ENCODE measurements at regions of chr18 and their contacts with region 1.

Region 1: GRCh38 chr18:12776821-12777471 is 74.1 kb downstream of the PSMG2 start:
- DNase-seq: no peak
- ATAC-seq: no peak
- H3K4me3 Mint-ChIP-seq: no peak overlapping the region
- H3K27ac Mint-ChIP-seq: no peak overlapping the region
- H3K4me1 Mint-ChIP-seq: peaks cover 13% of the 10 kb centered on the region
- H3K27me3 Mint-ChIP-seq: no peaks in the 10 kb centered on the region

Region 2: DNA sequence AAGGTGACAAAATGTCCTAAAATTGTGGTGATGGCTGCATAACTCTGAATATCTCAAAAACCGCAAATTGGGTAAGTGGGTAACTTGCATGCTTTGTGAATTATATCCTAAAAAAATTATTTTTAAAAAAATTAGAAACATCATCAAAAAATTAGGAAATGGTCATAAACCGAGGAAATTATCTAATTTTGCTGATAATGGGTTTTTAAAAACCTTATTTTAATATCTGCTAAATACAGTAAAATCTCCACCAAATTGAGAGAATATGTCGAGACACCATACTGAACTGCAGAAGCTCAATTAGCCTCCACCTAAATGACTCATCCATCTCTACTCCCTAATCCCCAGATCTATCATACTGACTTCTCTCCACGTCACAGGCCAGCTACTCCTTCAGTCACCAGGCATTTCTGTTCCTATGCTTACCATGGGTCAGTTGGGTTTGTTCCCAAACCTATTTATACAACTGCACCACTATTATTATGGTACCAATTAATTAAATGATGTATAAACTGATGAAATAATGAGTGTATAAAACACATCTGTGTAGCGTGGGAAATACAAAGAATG is 155.1 kb before region 1 on chr18:
- CTCF ChIA-PET with region 1: no interaction called
- POLR2A ChIA-PET with region 1: no interaction called
- DNase-seq: no peak
- ATAC-seq: no peak
- H3K4me3 Mint-ChIP-seq: no peak overlapping the region
- H3K27ac Mint-ChIP-seq: no peak overlapping the region
- H3K4me1 Mint-ChIP-seq: no peaks in the 10 kb centered on the region
- H3K27me3 Mint-ChIP-seq: peaks cover 10% of the 10 kb centered on the region

Region 3: DNA sequence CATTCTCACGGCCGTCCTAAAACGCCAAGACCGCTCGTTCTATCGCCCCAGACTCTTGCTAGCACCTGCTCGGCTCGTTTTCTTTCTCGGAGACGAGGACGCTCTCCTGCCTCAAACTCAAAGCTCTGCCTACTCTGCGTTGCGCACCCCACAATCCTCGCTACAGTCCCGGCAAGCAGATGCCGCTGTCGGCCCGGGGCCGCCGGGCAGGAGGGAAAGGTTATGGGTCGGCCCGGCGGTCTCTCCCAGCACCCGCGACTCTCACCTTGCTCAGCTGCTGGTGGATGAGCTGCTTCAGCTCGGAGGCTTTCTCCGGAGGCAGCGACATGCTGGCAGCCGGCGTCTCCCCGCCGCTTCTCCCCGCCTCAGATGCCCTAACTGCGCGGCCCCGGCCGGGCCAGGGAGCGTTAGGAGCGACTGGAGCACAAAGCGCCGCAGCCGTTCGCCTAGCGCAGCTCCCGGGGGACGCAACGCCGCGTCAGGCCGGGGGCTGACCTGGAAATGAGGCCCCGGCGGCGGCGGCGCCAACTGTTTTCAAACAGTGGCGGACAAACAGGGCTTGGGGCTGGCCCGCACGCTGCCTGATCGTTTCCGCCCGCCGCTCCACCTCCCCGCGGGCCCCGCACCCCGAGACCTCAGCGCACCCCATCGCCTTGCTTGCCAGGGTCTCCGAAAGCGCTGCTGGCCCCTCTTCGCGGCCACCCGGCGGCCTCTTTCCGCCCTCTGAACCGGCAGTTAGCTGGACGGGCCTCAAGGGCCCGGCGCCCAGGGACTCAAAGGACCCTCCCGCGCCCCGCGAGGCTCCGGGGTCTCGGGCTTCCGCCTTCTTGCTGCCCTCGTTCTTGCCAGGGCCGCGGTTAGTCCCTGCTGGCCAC is 74.5 kb before region 1 on chr18 and contains the starts of genes CEP76 and PSMG2:
- CTCF ChIA-PET with region 1: no interaction called
- POLR2A ChIA-PET with region 1: interaction called, 12 read pairs
- DNase-seq: peak; percentile 84
- ATAC-seq: peak; percentile 83
- H3K4me3 Mint-ChIP-seq: peak within 1 kb of the TSS; percentile 94
- H3K27ac Mint-ChIP-seq: peak within 1 kb of the TSS; percentile 100
- H3K4me1 Mint-ChIP-seq: peaks cover 47% of the 10 kb centered on the region
- H3K27me3 Mint-ChIP-seq: no peaks in the 10 kb centered on the region
- total RNA-seq, gene CEP76: 12.9 to 17.2 TPM
- total RNA-seq, gene PSMG2: 104 to 108 TPM

Region 4: DNA sequence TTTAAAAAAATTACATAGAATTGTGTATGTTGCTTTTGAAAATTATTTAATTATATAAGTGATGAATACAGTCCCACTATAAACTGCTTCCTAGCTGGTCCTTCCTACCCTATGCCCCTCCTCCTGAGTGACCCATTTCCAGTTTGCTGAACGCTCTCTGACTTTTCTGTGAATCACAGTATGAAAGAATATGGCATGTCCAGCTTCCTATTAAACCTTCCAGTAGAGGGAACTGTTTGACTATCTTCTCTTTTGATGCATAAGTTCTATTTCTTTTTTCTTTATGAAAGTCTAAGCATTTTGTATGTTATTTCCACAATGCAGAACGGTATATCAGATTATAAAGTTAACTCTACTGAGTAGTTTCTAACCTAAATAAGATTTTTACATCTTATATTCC is 32.8 kb before region 1 on chr18:
- CTCF ChIA-PET with region 1: interaction called, 10 read pairs
- POLR2A ChIA-PET with region 1: interaction called, 3 read pairs
- DNase-seq: no peak
- ATAC-seq: peak; percentile 63
- H3K4me3 Mint-ChIP-seq: no peak overlapping the region
- H3K27ac Mint-ChIP-seq: no peak overlapping the region
- H3K4me1 Mint-ChIP-seq: peaks cover 2% of the 10 kb centered on the region
- H3K27me3 Mint-ChIP-seq: no peaks in the 10 kb centered on the region

Region 5: GRCh38 chr18:12883684-12884405 is 106.9 kb after region 1 on chr18 and contains the start of gene PTPN2:
- CTCF ChIA-PET with region 1: interaction called, 3 read pairs
- POLR2A ChIA-PET with region 1: interaction called, 21 read pairs
- DNase-seq: peak; percentile 95
- ATAC-seq: peak; percentile 88
- H3K4me3 Mint-ChIP-seq: peak within 1 kb of the TSS; percentile 95
- H3K27ac Mint-ChIP-seq: peak within 1 kb of the TSS; percentile 91
- H3K4me1 Mint-ChIP-seq: peaks cover 58% of the 10 kb centered on the region
- H3K27me3 Mint-ChIP-seq: no peaks in the 10 kb centered on the region
- total RNA-seq, gene PTPN2: 52.9 to 53.6 TPM

Measured in activated CD8-positive, alpha-beta T cell treated with anti-CD3 and anti-CD28 coated beads, Interleukin-2, amount 10 ng/mL, durations not matched to agents 7 days and 5 days (primary cell).